Caco-2 (cell line): ENCODE measurements at regions of chr3 and their contacts with region 1.

Region 1: DNA sequence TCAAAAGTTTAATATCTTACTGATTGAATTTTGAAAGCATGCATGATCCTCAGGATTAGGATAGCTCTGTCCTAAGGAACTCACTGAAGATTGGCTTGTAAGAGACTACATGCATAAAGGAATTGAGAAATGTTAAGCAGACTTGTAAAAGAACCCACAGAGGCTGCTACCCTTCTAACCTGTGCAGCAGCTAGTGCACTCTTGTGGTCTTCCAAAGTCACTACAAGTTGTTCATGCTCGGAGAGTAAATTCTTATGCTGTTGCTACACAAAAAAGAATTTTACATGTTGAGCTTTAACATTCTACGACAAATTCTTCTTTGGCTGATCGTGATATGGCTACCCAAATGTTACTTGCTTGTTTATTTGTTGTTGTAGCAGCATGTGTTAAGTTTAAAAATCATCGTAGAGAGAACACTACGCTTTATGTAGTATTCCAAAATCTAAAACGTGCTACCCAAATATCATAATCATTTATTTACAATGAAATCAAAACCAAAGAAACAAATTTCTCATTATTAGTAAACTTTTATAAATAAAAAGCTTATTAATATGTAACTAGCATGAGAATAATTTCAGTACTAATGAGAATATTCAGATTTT is 55.0 kb downstream of the GOLIM4 start:
- DNase-seq: peak in 1 of 2 experiments; percentile 46
- H3K4me3 ChIP-seq: no peak overlapping the region
- H3K4me3 Mint-ChIP-seq: no peak overlapping the region
- H3K27ac Mint-ChIP-seq: no peak overlapping the region
- H3K4me1 ChIP-seq: no peaks in the 10 kb centered on the region
- H3K4me1 Mint-ChIP-seq: no peaks in the 10 kb centered on the region
- H3K27me3 ChIP-seq: no peaks in the 10 kb centered on the region
- H3K27me3 Mint-ChIP-seq: no peaks in the 10 kb centered on the region
- CTCF ChIP-seq: peak; percentile 73 to 85

Region 2: GRCh38 chr3:167394003-167394402 is 646.7 kb before region 1 on chr3:
- CTCF ChIA-PET with region 1: no interaction called
- POLR2A ChIA-PET with region 1: no interaction called
- intact Hi-C with region 1: loop called (anchors 2 kb)
- DNase-seq: no peak
- H3K4me3 ChIP-seq: no peak overlapping the region
- H3K4me3 Mint-ChIP-seq: no peak overlapping the region
- H3K27ac Mint-ChIP-seq: no peak overlapping the region
- H3K4me1 ChIP-seq: no peaks in the 10 kb centered on the region
- H3K4me1 Mint-ChIP-seq: no peaks in the 10 kb centered on the region
- H3K27me3 ChIP-seq: no peaks in the 10 kb centered on the region
- H3K27me3 Mint-ChIP-seq: peaks cover 3% of the 10 kb centered on the region
- CTCF ChIP-seq: peak in 1 of 2 experiments; percentile 19

Region 3: GRCh38 chr3:167406875-167407492 is 633.7 kb before region 1 on chr3:
- CTCF ChIA-PET with region 1: no interaction called
- POLR2A ChIA-PET with region 1: no interaction called
- intact Hi-C with region 1: loop called (anchors 2 kb)
- DNase-seq: peak; percentile 42 to 43
- H3K4me3 ChIP-seq: no peak overlapping the region
- H3K4me3 Mint-ChIP-seq: no peak overlapping the region
- H3K27ac Mint-ChIP-seq: no peak overlapping the region
- H3K4me1 ChIP-seq: no peaks in the 10 kb centered on the region
- H3K4me1 Mint-ChIP-seq: peaks cover 5% of the 10 kb centered on the region
- H3K27me3 ChIP-seq: no peaks in the 10 kb centered on the region
- H3K27me3 Mint-ChIP-seq: no peaks in the 10 kb centered on the region
- CTCF ChIP-seq: peak; percentile 35 to 74

Region 4: GRCh38 chr3:167837466-167837865 is 203.2 kb before region 1 on chr3:
- CTCF ChIA-PET with region 1: interaction called, 5 read pairs
- POLR2A ChIA-PET with region 1: no interaction called
- intact Hi-C with region 1: loop called (anchors 1 kb)
- DNase-seq: no peak
- H3K4me3 ChIP-seq: no peak overlapping the region
- H3K4me3 Mint-ChIP-seq: no peak overlapping the region
- H3K27ac Mint-ChIP-seq: no peak overlapping the region
- H3K4me1 ChIP-seq: no peaks in the 10 kb centered on the region
- H3K4me1 Mint-ChIP-seq: no peaks in the 10 kb centered on the region
- H3K27me3 ChIP-seq: no peaks in the 10 kb centered on the region
- H3K27me3 Mint-ChIP-seq: no peaks in the 10 kb centered on the region
- CTCF ChIP-seq: no peak

Region 5: GRCh38 chr3:167929968-167930367 is 110.7 kb before region 1 on chr3:
- CTCF ChIA-PET with region 1: interaction called, 7 read pairs
- POLR2A ChIA-PET with region 1: no interaction called
- intact Hi-C with region 1: loop called (anchors 1 kb)
- DNase-seq: no peak
- H3K4me3 ChIP-seq: no peak overlapping the region
- H3K4me3 Mint-ChIP-seq: no peak overlapping the region
- H3K27ac Mint-ChIP-seq: no peak overlapping the region
- H3K4me1 ChIP-seq: no peaks in the 10 kb centered on the region
- H3K4me1 Mint-ChIP-seq: no peaks in the 10 kb centered on the region
- H3K27me3 ChIP-seq: no peaks in the 10 kb centered on the region
- H3K27me3 Mint-ChIP-seq: peaks cover 3% of the 10 kb centered on the region
- CTCF ChIP-seq: no peak

Region 6: GRCh38 chr3:167978031-167978430 is 62.7 kb before region 1 on chr3:
- CTCF ChIA-PET with region 1: no interaction called
- POLR2A ChIA-PET with region 1: no interaction called
- intact Hi-C with region 1: loop called (anchors 2 kb)
- DNase-seq: peak; percentile 46 to 74
- H3K4me3 ChIP-seq: no peak overlapping the region
- H3K4me3 Mint-ChIP-seq: no peak overlapping the region
- H3K27ac Mint-ChIP-seq: no peak overlapping the region
- H3K4me1 ChIP-seq: peaks cover 21% of the 10 kb centered on the region
- H3K4me1 Mint-ChIP-seq: peaks cover 10% of the 10 kb centered on the region
- H3K27me3 ChIP-seq: no peaks in the 10 kb centered on the region
- H3K27me3 Mint-ChIP-seq: no peaks in the 10 kb centered on the region
- CTCF ChIP-seq: no peak